ENCODE measurements at regions of chr14 and their contacts with region 1.

Region 1: DNA sequence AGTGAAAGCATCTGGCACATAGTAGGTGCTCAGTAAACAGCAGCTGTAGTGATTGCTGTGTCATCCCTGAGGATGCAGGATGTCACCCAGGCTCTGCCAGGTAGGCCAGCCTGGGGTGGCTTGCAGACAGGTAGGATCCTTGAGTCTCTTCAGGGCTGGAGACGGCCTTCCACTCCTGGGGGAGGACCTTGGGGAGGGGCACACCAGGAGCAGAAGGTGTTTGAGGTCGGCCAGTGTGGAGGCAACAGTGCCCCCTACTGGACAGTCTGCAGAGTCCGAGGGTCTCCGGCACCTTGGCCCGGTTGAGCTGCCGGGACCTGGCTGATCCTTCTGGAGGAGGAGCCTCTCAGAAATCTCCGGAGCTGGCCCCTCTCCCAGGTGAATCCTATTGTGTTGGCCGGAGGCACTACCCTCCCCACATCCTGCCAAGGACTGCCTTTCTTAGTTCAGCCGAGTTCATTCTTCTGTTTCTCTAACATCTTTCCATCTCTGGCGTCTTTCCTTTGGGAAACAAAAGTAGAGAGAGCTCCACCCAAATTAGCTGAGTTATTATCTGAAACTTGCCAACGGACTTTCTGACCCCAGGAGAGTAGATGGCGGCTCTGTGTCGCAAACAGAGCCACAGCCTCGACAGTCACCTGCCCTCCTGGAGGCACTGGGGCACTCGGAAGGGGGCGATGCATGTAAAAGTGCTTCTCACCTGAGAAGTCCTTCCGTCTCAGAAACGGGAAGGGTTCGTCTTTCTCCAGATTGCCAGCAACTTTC is 41.8 kb upstream of the CLMN start:
- DNase-seq: peak; percentile 24
- ATAC-seq: peak; percentile 97
- H3K4me3 ChIP-seq: no peak overlapping the region
- H3K27ac ChIP-seq: no peak overlapping the region
- H3K4me1 ChIP-seq: peaks cover 0 to 6% of the 10 kb centered on the region in 2 experiments; a peak in 1 of 4 replicates
- H3K27me3 ChIP-seq: no peaks in the 10 kb centered on the region
- CTCF ChIP-seq: peak; percentile 25 to 83 (median 81); a peak in 4 of 6 replicates
- POLR2A ChIP-seq: no peak
- RAD21 ChIP-seq: peak; percentile 74

Region 2: DNA sequence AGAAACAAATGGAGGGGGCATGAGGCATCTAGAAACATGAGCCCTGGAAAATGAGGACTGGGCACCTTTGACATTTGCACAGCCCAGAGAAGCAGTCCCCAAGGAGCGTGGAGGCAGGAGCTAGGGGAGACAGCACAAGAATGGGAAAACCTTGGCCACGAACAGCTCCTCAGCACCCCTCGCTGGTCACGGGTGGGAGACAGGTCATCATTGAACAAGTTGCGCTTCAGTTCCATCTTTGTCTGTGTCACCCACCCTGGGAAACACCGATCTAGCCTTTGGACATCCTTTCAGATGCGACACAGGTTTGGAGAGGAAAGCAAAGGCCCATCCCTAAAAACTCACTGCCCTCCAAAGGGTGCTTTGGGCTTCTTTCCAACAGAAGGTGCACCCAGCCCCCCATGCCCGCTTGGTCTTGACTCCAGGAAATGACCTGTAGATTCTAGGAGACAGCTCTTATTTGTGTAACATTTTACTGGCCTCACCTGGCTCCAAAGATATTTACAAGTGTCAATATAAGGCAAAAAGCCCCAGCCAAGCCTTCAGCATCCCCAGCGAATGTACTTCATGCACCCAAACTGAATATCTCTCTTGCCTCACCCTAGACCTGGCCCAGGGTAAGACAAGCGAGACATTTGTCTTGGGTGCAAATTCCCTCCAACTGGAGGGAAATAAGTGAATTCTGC is 13.0 kb before region 1 on chr14:
- CTCF ChIA-PET with region 1: interaction called, 14 read pairs
- POLR2A ChIA-PET with region 1: no interaction called
- RAD21 ChIA-PET with region 1: no interaction called
- intact Hi-C with region 1: no loop called
- DNase-seq: no peak
- ATAC-seq: no peak
- H3K4me3 ChIP-seq: no peak overlapping the region
- H3K27ac ChIP-seq: no peak overlapping the region
- H3K4me1 ChIP-seq: peaks cover 0 to 8% of the 10 kb centered on the region in 2 experiments; a peak in 2 of 4 replicates
- H3K27me3 ChIP-seq: no peaks in the 10 kb centered on the region
- CTCF ChIP-seq: peak in 1 of 3 experiments; percentile 9; a peak in 1 of 6 replicates
- POLR2A ChIP-seq: no peak
- RAD21 ChIP-seq: peak; percentile 40

Measured in HCT116 (cell line).